Calu3 (cell line): ENCODE measurements at regions of chr4 and their contacts with region 1.

Region 1: GRCh38 chr4:103091601-103092223 is 7.9 kb downstream of the BDH2 start:
- DNase-seq: peak; percentile 38
- H3K4me3 Mint-ChIP-seq: no peak overlapping the region
- H3K27ac Mint-ChIP-seq: no peak overlapping the region
- H3K4me1 Mint-ChIP-seq: peaks cover 3% of the 10 kb centered on the region
- H3K27me3 Mint-ChIP-seq: no peaks in the 10 kb centered on the region
- CTCF ChIP-seq: peak; percentile 30

Region 2: DNA sequence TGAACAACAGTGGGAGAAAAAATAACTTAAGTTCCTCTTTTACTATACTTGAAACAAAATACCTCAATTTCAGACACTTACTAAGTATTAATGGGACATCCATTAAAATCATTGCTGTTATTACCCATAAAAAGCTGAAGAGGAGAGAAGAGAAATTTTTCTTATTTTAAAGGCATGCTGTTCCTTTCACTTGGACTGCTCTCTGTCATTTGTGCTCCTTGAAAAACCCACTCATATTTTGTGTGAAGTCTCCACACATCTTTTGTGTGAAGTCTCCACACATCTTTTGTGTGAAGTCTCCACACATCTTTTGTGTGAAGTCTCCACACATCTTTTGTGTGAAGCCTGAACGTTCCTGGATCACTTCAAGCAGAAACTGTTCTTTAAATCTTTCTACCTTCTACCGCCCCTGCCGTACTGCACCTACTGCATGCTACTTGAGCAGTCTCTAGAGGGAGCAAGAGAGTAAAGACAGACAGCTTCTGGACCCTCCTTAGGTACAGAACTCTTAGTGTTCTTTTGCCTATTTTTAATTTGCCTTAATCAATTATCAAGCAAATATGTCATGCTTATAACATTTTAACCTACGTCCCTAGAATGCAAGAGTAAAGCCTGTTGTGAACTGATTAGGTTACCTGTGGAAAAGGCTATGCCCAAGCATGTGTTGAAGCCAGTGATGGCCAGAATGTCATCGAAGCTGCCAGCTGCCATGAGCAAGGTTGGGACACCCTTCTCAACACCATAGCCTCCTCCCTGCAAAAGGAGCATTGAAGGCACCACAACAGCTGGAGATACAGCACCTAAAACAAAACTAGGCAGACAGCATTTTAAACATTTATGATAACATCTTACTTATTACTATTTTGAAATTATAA is 45.1 kb before region 1 on chr4:
- CTCF ChIA-PET with region 1: no interaction called
- intact Hi-C with region 1: loop called (anchors 5 kb)
- DNase-seq: peak; percentile 37
- H3K4me3 Mint-ChIP-seq: no peak overlapping the region
- H3K27ac Mint-ChIP-seq: no peak overlapping the region
- H3K4me1 Mint-ChIP-seq: no peaks in the 10 kb centered on the region
- H3K27me3 Mint-ChIP-seq: no peaks in the 10 kb centered on the region
- CTCF ChIP-seq: peak; percentile 38

Region 3: GRCh38 chr4:103156106-103156505 is 64.4 kb after region 1 on chr4:
- CTCF ChIA-PET with region 1: no interaction called
- intact Hi-C with region 1: no loop called
- DNase-seq: no peak
- H3K4me3 Mint-ChIP-seq: no peak overlapping the region
- H3K27ac Mint-ChIP-seq: no peak overlapping the region
- H3K4me1 Mint-ChIP-seq: no peaks in the 10 kb centered on the region
- H3K27me3 Mint-ChIP-seq: no peaks in the 10 kb centered on the region
- CTCF ChIP-seq: no peak

Region 4: GRCh38 chr4:103324811-103325210 is 233.1 kb after region 1 on chr4:
- CTCF ChIA-PET with region 1: no interaction called
- intact Hi-C with region 1: no loop called
- DNase-seq: no peak
- H3K4me3 Mint-ChIP-seq: no peak overlapping the region
- H3K27ac Mint-ChIP-seq: no peak overlapping the region
- H3K4me1 Mint-ChIP-seq: peaks cover 10% of the 10 kb centered on the region
- H3K27me3 Mint-ChIP-seq: no peaks in the 10 kb centered on the region
- CTCF ChIP-seq: no peak